ENCODE measurements at regions of chr22 and their contacts with region 1.

Region 1: GRCh38 chr22:26529345-26529744 is 17.1 kb upstream of the TFIP11 start:
- DNase-seq: peak; percentile 18 to 76
- ATAC-seq: peak; percentile 52 to 70 (median 66)
- H3K4me3 ChIP-seq: no peak overlapping the region
- H3K27ac ChIP-seq: peak overlapping the region; percentile 84
- H3K4me1 ChIP-seq: peaks cover 28% of the 10 kb centered on the region
- H3K27me3 ChIP-seq: no peaks in the 10 kb centered on the region
- CTCF ChIP-seq: no peak

Region 2: DNA sequence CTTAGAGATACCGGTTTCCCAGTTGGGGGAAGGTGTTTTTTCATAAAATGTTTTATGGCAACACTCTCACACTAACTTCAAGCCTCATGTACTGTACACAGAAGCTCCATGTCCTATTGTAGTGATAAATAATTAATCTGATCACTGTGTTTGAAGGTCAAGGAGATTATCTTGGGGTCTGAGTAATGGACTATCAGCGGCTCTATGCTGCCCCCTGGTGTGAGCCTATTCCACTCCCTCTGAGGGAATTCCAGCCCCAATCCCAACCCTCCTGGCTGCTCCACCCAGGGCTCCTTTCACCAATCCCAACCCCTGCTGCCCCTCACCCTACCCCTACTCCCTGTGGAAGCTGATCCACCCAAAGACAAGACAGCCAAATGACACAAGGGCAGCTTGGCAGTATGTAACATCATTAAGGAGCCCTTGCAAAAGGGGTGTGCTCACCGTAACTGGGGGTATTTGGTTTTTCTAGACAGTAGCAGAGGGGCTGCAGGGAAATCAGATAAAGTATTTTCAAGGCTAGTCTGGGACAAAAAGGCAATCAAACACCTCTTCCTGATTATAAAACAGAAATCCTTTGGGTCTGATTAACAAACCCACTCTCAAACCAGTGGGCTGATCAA is 68.0 kb before region 1 on chr22:
- intact Hi-C with region 1: no loop called
- DNase-seq: peak; percentile 63 to 75
- ATAC-seq: peak; percentile 59 to 80 (median 74)
- H3K4me3 ChIP-seq: no peak overlapping the region
- H3K27ac ChIP-seq: no peak overlapping the region
- H3K4me1 ChIP-seq: no peaks in the 10 kb centered on the region
- H3K27me3 ChIP-seq: no peaks in the 10 kb centered on the region
- CTCF ChIP-seq: peak; percentile 71

Region 3: GRCh38 chr22:26502688-26503561 is 26.4 kb before region 1 on chr22:
- intact Hi-C with region 1: loop called in 1 of 2 experiments (anchors 2 kb)
- DNase-seq: peak; percentile 29 to 75
- ATAC-seq: peak; percentile 83 to 91 (median 89)
- H3K4me3 ChIP-seq: peak overlapping the region; percentile 13
- H3K27ac ChIP-seq: peak overlapping the region; percentile 88
- H3K4me1 ChIP-seq: peaks cover 41% of the 10 kb centered on the region
- H3K27me3 ChIP-seq: no peaks in the 10 kb centered on the region
- CTCF ChIP-seq: peak; percentile 53

Region 4: GRCh38 chr22:26550498-26551033 is 21.2 kb after region 1 on chr22:
- intact Hi-C with region 1: loop called in 1 of 2 experiments (anchors 2 kb)
- DNase-seq: peak in 1 of 2 donors; percentile 62
- ATAC-seq: peak; percentile 52 to 79 (median 72)
- H3K4me3 ChIP-seq: no peak overlapping the region
- H3K27ac ChIP-seq: peak overlapping the region; percentile 69
- H3K4me1 ChIP-seq: peaks cover 67% of the 10 kb centered on the region
- H3K27me3 ChIP-seq: no peaks in the 10 kb centered on the region
- CTCF ChIP-seq: no peak

Region 5: DNA sequence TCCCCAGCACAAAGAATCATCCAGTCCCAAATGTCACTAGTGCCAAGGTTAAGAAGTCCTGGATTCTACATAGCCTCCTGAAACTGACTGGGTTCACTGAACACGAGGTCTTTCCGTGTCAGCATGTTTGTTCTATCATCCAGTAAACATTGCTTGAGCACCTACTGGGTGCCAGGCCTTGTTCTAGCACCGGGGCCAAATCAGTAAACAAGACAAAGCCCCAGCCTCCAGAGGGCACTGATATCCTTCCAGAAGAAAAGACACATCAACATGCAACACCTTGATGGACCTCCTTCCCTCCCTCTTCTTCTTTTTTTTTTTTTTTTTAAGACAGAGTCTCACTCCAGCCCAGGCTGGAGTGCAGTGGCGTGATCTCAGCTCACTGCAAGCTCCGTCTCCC is 33.7 kb after region 1 on chr22:
- intact Hi-C with region 1: loop called in 1 of 2 experiments (anchors 5 kb)
- DNase-seq: no peak
- ATAC-seq: peak in 1 of 4 donors; percentile 25
- H3K4me3 ChIP-seq: no peak overlapping the region
- H3K27ac ChIP-seq: peak overlapping the region; percentile 90
- H3K4me1 ChIP-seq: peaks cover 40% of the 10 kb centered on the region
- H3K27me3 ChIP-seq: no peaks in the 10 kb centered on the region
- CTCF ChIP-seq: no peak

Measured in psoas muscle (tissue), 8 donors.